Calu3 (cell line): ENCODE measurements at regions of chr18 and their contacts with region 1.

Region 1: GRCh38 chr18:60684843-60685513 is 312.4 kb upstream of the MC4R start:
- DNase-seq: no peak
- H3K4me3 Mint-ChIP-seq: no peak overlapping the region
- H3K27ac Mint-ChIP-seq: no peak overlapping the region
- H3K4me1 Mint-ChIP-seq: no peaks in the 10 kb centered on the region
- H3K27me3 Mint-ChIP-seq: no peaks in the 10 kb centered on the region
- CTCF ChIP-seq: peak; percentile 41

Region 2: GRCh38 chr18:60577457-60577856 is 107.5 kb before region 1 on chr18:
- CTCF ChIA-PET with region 1: no interaction called
- intact Hi-C with region 1: no loop called
- DNase-seq: no peak
- H3K4me3 Mint-ChIP-seq: no peak overlapping the region
- H3K27ac Mint-ChIP-seq: no peak overlapping the region
- H3K4me1 Mint-ChIP-seq: no peaks in the 10 kb centered on the region
- H3K27me3 Mint-ChIP-seq: no peaks in the 10 kb centered on the region
- CTCF ChIP-seq: no peak

Region 3: DNA sequence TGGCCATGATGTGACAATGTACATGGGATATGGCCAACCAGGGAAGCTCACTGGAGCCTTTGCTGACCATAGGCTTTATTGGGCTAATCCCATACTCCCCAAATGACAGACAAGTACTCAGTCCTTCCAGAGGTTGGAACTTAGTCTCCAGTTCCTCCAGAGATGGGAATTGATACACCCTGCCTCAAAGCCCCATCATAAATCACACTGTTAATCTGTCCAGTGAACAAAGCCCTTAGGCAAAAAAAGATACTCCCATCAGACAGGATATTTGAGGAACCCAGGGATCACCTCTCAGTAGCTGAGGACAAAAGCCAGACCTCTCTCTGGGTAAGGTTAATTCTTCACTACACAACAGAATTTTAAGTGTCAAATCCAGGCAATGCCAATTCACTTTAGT is 400.8 kb after region 1 on chr18:
- CTCF ChIA-PET with region 1: no interaction called
- intact Hi-C with region 1: loop called (anchors 10 kb)
- DNase-seq: no peak
- H3K4me3 Mint-ChIP-seq: no peak overlapping the region
- H3K27ac Mint-ChIP-seq: no peak overlapping the region
- H3K4me1 Mint-ChIP-seq: no peaks in the 10 kb centered on the region
- H3K27me3 Mint-ChIP-seq: no peaks in the 10 kb centered on the region
- CTCF ChIP-seq: no peak

Region 4: GRCh38 chr18:61322265-61322873 is 637.4 kb after region 1 on chr18:
- CTCF ChIA-PET with region 1: no interaction called
- intact Hi-C with region 1: loop called (anchors 5 kb)
- DNase-seq: peak; percentile 87
- H3K4me3 Mint-ChIP-seq: no peak overlapping the region
- H3K27ac Mint-ChIP-seq: no peak overlapping the region
- H3K4me1 Mint-ChIP-seq: no peaks in the 10 kb centered on the region
- H3K27me3 Mint-ChIP-seq: no peaks in the 10 kb centered on the region
- CTCF ChIP-seq: peak; percentile 96

Region 5: GRCh38 chr18:61502472-61502871 is 817.5 kb after region 1 on chr18:
- CTCF ChIA-PET with region 1: no interaction called
- intact Hi-C with region 1: loop called (anchors 2 kb)
- DNase-seq: peak; percentile 60
- H3K4me3 Mint-ChIP-seq: no peak overlapping the region
- H3K27ac Mint-ChIP-seq: no peak overlapping the region
- H3K4me1 Mint-ChIP-seq: peaks cover 15% of the 10 kb centered on the region
- H3K27me3 Mint-ChIP-seq: peaks cover 17% of the 10 kb centered on the region
- CTCF ChIP-seq: peak; percentile 54